ENCODE measurements at regions of chr12 and their contacts with region 1.

Region 1: GRCh38 chr12:110280779-110281548 is at the start of gene ATP2A2:
- DNase-seq: peak; percentile 98
- H3K4me3 ChIP-seq: peak within 1 kb of the TSS; percentile 81 to 92
- H3K27ac ChIP-seq: peak within 1 kb of the TSS; percentile 91 to 96
- H3K4me1 ChIP-seq: peaks cover 23 to 31% of the 10 kb centered on the region in 2 experiments
- H3K27me3 ChIP-seq: no peaks in the 10 kb centered on the region
- CTCF ChIP-seq: no peak
- EP300 ChIP-seq: no peak
- RAD21 ChIP-seq: no peak
- polyA plus RNA-seq, gene ATP2A2: 83.9 and 120 TPM in 2 replicates

Region 2: GRCh38 chr12:110270125-110270962 is 10.6 kb before region 1 on chr12:
- CTCF ChIA-PET with region 1: interaction called, 12 read pairs
- POLR2A ChIA-PET with region 1: interaction called, 18 read pairs
- DNase-seq: peak; percentile 64
- H3K4me3 ChIP-seq: no peak overlapping the region; a peak in 1 of 4 replicates
- H3K27ac ChIP-seq: peak overlapping the region; percentile 73 to 92
- H3K4me1 ChIP-seq: peaks cover 26 to 49% of the 10 kb centered on the region in 2 experiments
- H3K27me3 ChIP-seq: no peaks in the 10 kb centered on the region
- CTCF ChIP-seq: no peak
- EP300 ChIP-seq: no peak
- RAD21 ChIP-seq: 0 out of 2 replicates have a peak, but pooled peaks have one; percentile 6

Region 3: DNA sequence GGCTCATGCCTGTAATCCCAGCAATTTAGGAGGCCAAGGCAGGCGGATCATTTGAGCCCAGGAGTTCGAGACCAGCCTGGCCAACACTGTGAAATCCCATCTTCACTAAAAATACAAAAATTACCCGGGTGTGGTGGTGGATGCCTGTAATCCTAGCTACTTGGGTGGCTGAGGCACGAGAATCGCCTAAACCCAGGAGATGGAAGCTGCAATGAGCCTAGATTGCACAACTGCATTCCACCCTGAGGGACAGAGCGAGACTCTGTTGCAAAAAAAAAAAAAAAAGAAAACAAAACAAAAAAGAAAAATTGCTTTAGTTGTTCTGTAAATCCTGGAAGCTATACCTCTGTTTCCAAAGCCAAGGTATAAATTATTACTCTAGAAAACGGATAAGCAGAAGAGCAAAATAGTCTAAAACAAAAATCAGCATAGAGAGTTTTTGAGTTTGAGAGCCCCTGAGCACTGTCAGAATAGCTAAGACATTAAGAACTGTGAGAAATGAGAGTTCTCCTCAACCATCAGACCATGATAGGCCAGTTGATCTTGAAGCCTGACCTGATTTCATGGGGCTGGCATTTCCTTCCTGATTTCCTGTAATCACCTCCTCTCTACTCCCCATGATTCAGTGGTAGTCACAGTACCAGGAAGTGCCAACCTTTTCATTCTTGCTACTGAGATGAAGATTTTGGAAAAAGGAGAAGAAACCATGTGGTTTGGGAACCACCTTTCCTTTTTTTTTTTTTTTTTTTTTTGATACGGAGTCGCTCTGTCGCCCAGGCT is 31.8 kb after region 1 on chr12:
- CTCF ChIA-PET with region 1: no interaction called
- POLR2A ChIA-PET with region 1: no interaction called
- DNase-seq: no peak
- H3K4me3 ChIP-seq: no peak overlapping the region
- H3K27ac ChIP-seq: peak overlapping the region in 1 of 2 experiments; percentile 97; a peak in 2 of 4 replicates
- H3K4me1 ChIP-seq: peaks cover 0 to 56% of the 10 kb centered on the region in 2 experiments; a peak in 3 of 4 replicates
- H3K27me3 ChIP-seq: no peaks in the 10 kb centered on the region
- CTCF ChIP-seq: no peak
- EP300 ChIP-seq: no peak; a peak in 1 of 4 replicates
- RAD21 ChIP-seq: no peak